ENCODE measurements at regions of chr16 and their contacts with region 1.

Region 1: DNA sequence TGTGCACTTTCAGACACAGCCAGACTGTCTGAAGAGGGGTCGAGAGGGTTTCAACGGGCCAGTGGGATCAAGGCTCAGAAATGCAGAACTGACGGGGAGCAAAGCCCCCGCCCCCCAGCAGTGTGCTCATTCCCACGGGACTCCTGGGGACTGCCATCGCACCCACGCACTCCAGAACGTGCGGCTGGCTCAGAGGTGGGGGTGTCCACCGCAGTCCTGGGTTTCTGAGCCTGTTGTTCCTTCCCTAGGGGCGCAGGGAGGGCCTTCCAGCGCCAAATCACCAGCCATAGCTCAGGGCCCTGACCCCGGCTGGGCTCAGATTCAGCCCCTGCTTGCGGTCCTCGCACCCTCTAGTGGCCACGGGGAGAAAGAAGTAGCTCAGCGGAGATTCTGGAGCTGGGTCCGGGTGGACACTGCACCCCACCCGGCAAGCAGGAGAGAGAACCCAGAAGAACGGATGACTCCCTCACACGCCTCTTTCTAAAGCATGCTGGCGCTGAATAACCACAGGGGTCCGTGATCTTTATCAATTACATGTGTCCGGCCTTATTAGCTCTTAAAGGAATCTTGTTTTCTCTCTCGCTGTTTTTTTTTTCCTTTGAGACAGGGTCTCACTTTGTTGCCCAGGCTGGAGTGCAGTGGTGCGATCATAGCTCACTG is 45.0 kb upstream of the USP7 start:
- DNase-seq: peak; percentile 90
- CTCF ChIP-seq: peak; percentile 87

Region 2: DNA sequence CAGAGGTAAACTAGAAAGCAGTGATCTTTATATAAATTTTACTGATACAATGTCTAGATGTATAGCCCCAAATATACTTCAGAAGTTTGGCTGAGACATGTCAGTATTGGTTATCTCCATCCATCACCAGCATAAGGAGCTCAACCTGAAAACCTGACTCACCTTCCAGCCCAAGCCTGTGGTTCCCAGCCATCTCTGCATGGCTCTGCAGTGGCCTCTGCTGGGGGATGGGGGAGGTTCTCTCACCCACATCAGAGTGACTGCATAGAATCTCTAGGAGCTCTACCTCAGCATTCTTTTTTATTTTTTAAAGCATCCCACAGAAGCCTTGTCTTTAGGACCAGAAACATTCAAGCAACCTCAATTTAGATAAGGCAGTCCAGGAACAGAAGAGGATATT is 72.3 kb before region 1 on chr16:
- CTCF ChIA-PET with region 1: interaction called, 33 read pairs
- POLR2A ChIA-PET with region 1: no interaction called
- DNase-seq: peak; percentile 73
- CTCF ChIP-seq: peak; percentile 71

Region 3: GRCh38 chr16:8967132-8967821 is 41.5 kb before region 1 on chr16:
- CTCF ChIA-PET with region 1: interaction called, 12 read pairs
- POLR2A ChIA-PET with region 1: no interaction called
- DNase-seq: no peak
- CTCF ChIP-seq: no peak

Region 4: DNA sequence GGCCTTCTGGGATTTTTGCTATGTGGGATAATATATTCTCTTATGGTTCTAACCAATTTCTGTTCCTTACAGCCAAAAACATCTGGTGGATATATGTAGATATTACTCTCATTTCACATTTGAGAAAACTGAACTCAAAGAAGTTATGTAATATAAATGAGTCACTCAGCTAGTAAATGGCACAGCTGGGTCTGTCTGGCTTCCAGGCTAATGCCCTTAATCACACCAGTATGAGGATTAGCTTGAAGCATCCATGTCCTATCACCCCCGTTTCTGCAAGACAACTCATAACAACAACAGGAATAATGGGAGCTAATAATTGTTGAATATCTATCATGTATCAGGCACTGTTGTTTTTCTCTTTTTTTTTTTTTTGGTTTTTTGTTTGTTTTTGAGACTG is 10.6 kb before region 1 on chr16:
- CTCF ChIA-PET with region 1: interaction called, 43 read pairs
- POLR2A ChIA-PET with region 1: no interaction called
- DNase-seq: no peak
- CTCF ChIP-seq: no peak

Region 5: GRCh38 chr16:9437115-9437514 is 428.4 kb after region 1 on chr16:
- CTCF ChIA-PET with region 1: no interaction called
- POLR2A ChIA-PET with region 1: no interaction called
- DNase-seq: no peak
- CTCF ChIP-seq: no peak